Spleen (tissue), 13 donors: ENCODE measurements at regions of chr2 and their contacts with region 1.

Region 1: GRCh38 chr2:29196792-29197788 is 81.9 kb downstream of the CLIP4 start:
- DNase-seq: peak; percentile 85
- H3K4me3 ChIP-seq: no peak overlapping the region
- H3K27ac ChIP-seq: no peak overlapping the region
- H3K4me1 ChIP-seq: peaks cover 0 to 6% (median 0%) of the 10 kb centered on the region in 6 donors
- H3K27me3 ChIP-seq: no peaks in the 10 kb centered on the region
- CTCF ChIP-seq: peak; percentile 52 to 82 (median 70)
- POLR2A ChIP-seq: no peak

Region 2: DNA sequence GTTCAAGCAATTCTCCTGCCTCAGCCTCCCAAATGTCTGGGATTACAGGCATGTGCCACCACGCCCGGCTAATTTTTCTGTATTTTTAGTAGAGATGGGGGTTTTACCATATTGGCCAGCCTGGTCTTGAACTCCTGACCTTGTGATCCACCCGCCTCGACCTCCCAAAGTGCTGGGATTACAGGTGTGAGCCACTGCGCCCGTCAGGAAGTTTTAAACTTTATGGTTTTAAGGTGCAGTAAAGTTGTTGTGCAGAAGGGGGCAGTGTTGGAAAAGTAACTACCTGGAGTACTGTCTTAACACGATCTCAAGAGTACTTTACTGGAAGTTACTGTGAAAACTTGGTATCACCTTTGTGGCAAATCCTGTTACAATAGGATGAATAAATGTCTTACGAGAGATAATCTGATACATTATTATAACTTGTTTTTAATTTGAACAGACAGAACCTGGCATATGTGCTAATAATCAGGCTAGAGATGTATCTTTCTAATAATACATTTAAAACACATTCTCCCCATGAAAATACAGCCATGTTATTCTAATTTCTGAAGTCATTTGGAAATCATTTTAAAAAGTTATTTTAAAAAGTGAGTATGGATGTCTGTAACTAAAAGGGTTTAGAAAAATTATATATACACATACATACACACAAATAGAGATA is 375.7 kb before region 1 on chr2:
- intact Hi-C with region 1: loop called (anchors 5 kb)
- DNase-seq: no peak
- H3K4me3 ChIP-seq: no peak overlapping the region
- H3K27ac ChIP-seq: no peak overlapping the region
- H3K4me1 ChIP-seq: peaks cover 0 to 6% (median 0%) of the 10 kb centered on the region in 6 donors
- H3K27me3 ChIP-seq: no peaks in the 10 kb centered on the region
- CTCF ChIP-seq: peak; percentile 28 to 78 (median 70)
- POLR2A ChIP-seq: no peak

Region 3: DNA sequence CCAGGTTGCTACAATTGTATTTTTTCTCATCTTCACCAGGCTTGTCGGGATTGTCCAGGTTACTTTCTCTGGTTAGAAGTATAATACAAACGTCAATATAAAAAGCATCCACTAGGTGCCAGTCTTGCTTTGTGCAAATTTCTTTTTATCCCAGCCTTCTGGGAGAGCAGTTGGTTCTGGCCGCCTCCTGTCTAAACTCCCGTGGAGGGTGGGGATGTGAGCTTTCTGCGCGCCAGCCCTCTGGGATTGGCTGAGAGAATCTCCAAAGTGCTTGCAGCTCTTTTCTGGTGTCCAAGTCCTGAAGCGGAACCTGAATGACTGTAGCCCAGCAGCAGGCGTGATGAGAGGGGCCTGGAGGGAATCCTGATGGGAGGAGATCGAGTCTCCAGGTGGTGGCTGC is 238.4 kb before region 1 on chr2:
- intact Hi-C with region 1: loop called (anchors 2 kb)
- DNase-seq: no peak
- H3K4me3 ChIP-seq: no peak overlapping the region
- H3K27ac ChIP-seq: no peak overlapping the region
- H3K4me1 ChIP-seq: peaks cover 0 to 16% (median 4%) of the 10 kb centered on the region in 6 donors
- H3K27me3 ChIP-seq: peaks cover 0 to 5% (median 0%) of the 10 kb centered on the region in 7 donors
- CTCF ChIP-seq: peak in 9 of 11 experiments; percentile 40 to 62 (median 54)
- POLR2A ChIP-seq: no peak

Region 4: GRCh38 chr2:29273685-29274611 is 76.9 kb after region 1 on chr2:
- intact Hi-C with region 1: no loop called
- DNase-seq: no peak
- H3K4me3 ChIP-seq: no peak overlapping the region
- H3K27ac ChIP-seq: no peak overlapping the region
- H3K4me1 ChIP-seq: no peaks in the 10 kb centered on the region
- H3K27me3 ChIP-seq: peaks cover 0 to 21% (median 0%) of the 10 kb centered on the region in 7 donors
- CTCF ChIP-seq: no peak
- POLR2A ChIP-seq: no peak

Region 5: GRCh38 chr2:29295857-29296256 is 98.8 kb after region 1 on chr2:
- intact Hi-C with region 1: no loop called
- DNase-seq: no peak
- H3K4me3 ChIP-seq: no peak overlapping the region
- H3K27ac ChIP-seq: no peak overlapping the region
- H3K4me1 ChIP-seq: no peaks in the 10 kb centered on the region
- H3K27me3 ChIP-seq: peaks cover 0 to 18% (median 6%) of the 10 kb centered on the region in 7 donors
- CTCF ChIP-seq: no peak
- POLR2A ChIP-seq: no peak